ENCODE measurements at regions of chr19 and their contacts with region 1.

Region 1: DNA sequence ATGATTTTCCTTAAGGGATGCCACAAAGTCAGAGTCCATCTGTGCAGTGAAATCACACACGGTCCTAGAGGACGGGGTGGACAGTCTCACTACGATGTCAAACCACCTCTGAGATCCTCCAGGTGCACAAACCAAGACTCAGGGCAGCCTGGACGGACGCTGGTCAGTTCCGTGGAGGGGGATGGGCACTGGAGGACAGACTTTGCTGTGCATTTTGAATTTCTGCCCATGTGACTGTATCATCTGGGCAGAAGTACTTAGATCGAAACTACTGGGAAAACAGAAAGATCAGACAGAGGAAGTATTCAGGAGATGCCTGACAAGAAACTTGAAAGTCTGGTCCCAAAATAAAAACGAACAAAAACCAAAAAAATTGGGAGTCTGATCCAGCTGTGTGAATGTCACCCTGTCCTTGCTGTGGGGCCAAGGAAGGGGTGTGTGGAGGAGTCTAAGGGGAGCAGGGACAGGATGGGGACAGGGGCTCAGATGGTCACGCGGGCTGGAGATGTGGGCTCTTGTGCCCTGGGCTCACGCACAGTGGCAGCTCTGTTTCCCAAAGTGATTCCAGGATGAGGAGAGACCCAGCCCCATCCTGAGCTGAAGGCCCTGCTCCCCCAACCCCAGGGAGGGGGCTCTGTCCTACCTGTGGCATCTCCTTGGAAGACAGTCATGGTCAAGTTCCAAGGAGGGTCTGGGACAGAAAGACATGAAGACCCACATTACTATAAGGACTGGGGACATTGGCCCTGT is 1.5 kb downstream of the SIGLEC8 start:
- DNase-seq: no peak
- ATAC-seq: no peak
- H3K4me3 ChIP-seq: no peak overlapping the region
- H3K27ac ChIP-seq: no peak overlapping the region
- H3K4me1 ChIP-seq: no peaks in the 10 kb centered on the region
- H3K27me3 ChIP-seq: no peaks in the 10 kb centered on the region
- CTCF ChIP-seq: no peak

Region 2: GRCh38 chr19:50449236-50449899 is 1007.3 kb before region 1 on chr19:
- CTCF ChIA-PET with region 1: no interaction called
- POLR2A ChIA-PET with region 1: no interaction called
- in situ Hi-C with region 1: no loop called
- intact Hi-C with region 1: no loop called
- DNase-seq: no peak
- ATAC-seq: no peak
- H3K4me3 ChIP-seq: no peak overlapping the region
- H3K27ac ChIP-seq: no peak overlapping the region
- H3K4me1 ChIP-seq: no peaks in the 10 kb centered on the region
- H3K27me3 ChIP-seq: no peaks in the 10 kb centered on the region
- CTCF ChIP-seq: no peak

Region 3: GRCh38 chr19:50724522-50725217 is 732.0 kb before region 1 on chr19:
- CTCF ChIA-PET with region 1: no interaction called
- POLR2A ChIA-PET with region 1: no interaction called
- in situ Hi-C with region 1: no loop called
- intact Hi-C with region 1: no loop called
- DNase-seq: no peak
- ATAC-seq: no peak
- H3K4me3 ChIP-seq: peak overlapping the region in 1 of 2 experiments; percentile 38; a peak in 1 of 4 replicates
- H3K27ac ChIP-seq: no peak overlapping the region
- H3K4me1 ChIP-seq: no peaks in the 10 kb centered on the region
- H3K27me3 ChIP-seq: no peaks in the 10 kb centered on the region
- CTCF ChIP-seq: no peak

Region 4: GRCh38 chr19:51514866-51515481 is 58.3 kb after region 1 on chr19:
- CTCF ChIA-PET with region 1: no interaction called
- POLR2A ChIA-PET with region 1: no interaction called
- in situ Hi-C with region 1: no loop called
- intact Hi-C with region 1: no loop called
- DNase-seq: peak; percentile 39
- ATAC-seq: peak; percentile 69
- H3K4me3 ChIP-seq: no peak overlapping the region
- H3K27ac ChIP-seq: no peak overlapping the region
- H3K4me1 ChIP-seq: no peaks in the 10 kb centered on the region
- H3K27me3 ChIP-seq: peaks cover 7% of the 10 kb centered on the region
- CTCF ChIP-seq: peak; percentile 81

Region 5: DNA sequence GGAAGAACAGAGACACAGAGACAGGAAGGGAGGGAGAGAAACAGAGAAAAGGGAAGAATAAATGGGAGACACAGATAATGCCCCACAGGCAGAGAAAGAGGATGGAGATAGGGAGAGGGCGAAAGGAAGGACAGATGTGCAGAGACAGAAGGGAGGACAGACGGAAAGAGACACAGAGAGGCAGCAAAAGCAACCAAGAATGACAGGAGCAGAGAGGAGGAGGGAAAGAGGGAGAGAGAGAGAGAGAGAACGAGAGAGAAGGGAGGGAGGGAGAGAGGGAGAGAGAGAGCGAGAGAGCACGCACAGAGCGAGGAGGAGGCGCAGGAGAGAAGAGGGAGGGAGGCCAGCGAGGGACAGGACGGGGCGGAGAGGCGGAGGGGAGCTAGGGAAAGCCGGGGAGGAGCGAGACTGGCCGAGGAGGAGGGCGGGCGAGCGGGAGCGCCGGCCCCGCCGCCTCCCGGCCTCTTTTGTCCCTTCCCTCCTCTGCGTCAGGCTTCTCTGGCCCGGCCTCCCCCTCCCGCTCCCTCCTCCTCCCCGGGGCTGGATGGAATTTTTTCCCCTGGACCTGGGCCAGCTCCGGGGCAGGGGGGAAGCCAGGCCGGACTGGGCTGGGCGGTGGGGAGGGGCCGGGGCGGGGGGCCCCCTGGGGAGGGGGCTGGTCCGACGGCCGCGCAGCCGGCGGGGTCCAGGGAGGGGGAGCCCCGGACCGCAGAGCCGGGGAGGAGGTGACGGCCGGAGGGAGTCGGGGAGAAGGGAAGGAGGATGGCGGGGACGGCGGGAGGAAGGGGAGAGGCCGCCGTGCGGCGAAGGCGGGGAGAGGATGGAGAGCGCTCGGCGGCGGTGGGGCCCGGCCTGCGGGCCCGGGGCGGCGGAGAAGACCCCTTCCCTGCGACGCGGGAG is 232.2 kb after region 1 on chr19:
- CTCF ChIA-PET with region 1: no interaction called
- POLR2A ChIA-PET with region 1: interaction called, 18 read pairs
- in situ Hi-C with region 1: no loop called
- intact Hi-C with region 1: no loop called
- DNase-seq: no peak
- ATAC-seq: peak; percentile 83
- H3K4me3 ChIP-seq: peak overlapping the region; percentile 70 to 76
- H3K27ac ChIP-seq: peak overlapping the region; percentile 81
- H3K4me1 ChIP-seq: peaks cover 15% of the 10 kb centered on the region
- H3K27me3 ChIP-seq: no peaks in the 10 kb centered on the region
- CTCF ChIP-seq: no peak

Region 6: GRCh38 chr19:51799034-51799773 is 342.5 kb after region 1 on chr19:
- CTCF ChIA-PET with region 1: no interaction called
- POLR2A ChIA-PET with region 1: no interaction called
- in situ Hi-C with region 1: no loop called
- intact Hi-C with region 1: no loop called
- DNase-seq: no peak
- ATAC-seq: peak; percentile 94
- H3K4me3 ChIP-seq: no peak overlapping the region
- H3K27ac ChIP-seq: no peak overlapping the region
- H3K4me1 ChIP-seq: no peaks in the 10 kb centered on the region
- H3K27me3 ChIP-seq: no peaks in the 10 kb centered on the region
- CTCF ChIP-seq: no peak